Panc1 (cell line): ENCODE measurements at regions of chr20 and their contacts with region 1.

Region 1: DNA sequence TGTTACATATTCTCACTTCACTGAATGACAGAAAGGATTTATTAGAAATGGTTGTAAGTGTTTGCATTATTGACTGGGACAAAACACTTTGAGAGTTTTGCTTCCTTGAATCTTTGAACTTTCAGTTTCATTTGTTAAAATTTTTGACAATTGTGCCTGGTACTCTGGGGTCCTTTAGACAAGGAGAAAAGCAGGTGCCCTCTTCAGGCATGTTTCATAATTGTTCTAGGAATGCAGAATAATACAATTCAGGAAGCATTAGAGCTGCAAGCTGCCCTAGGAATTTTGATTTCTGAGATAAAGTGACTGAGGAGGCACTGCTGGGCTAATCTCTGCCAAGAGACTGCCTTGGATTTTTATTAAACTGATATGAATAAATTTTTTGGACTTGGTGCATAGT is 49.7 kb downstream of the TOP1 start:
- DNase-seq: no peak
- ATAC-seq: peak; percentile 72; the same call in 1 of the 2 replicates
- H3K4me3 ChIP-seq: no peak overlapping the region
- H3K27ac ChIP-seq: no peak overlapping the region
- H3K4me1 ChIP-seq: peaks cover 25% of the 10 kb centered on the region
- H3K27me3 ChIP-seq: no peaks in the 10 kb centered on the region
- CTCF ChIP-seq: peak; percentile 49; the same call in 1 of the 2 replicates

Region 2: GRCh38 chr20:40990542-40991120 is 87.7 kb before region 1 on chr20:
- CTCF ChIA-PET with region 1: interaction called, 11 read pairs
- POLR2A ChIA-PET with region 1: no interaction called
- in situ Hi-C with region 1: no loop called
- intact Hi-C with region 1: no loop called
- DNase-seq: peak; percentile 81
- ATAC-seq: peak; percentile 100
- H3K4me3 ChIP-seq: no peak overlapping the region
- H3K27ac ChIP-seq: no peak overlapping the region
- H3K4me1 ChIP-seq: no peaks in the 10 kb centered on the region
- H3K27me3 ChIP-seq: no peaks in the 10 kb centered on the region
- CTCF ChIP-seq: peak; percentile 89